ENCODE measurements at regions of chr10 and their contacts with region 1.

Region 1: GRCh38 chr10:6401562-6402348 is 178.3 kb downstream of the PRKCQ start:
- DNase-seq: peak; percentile 92
- H3K4me3 ChIP-seq: peak overlapping the region; percentile 35
- H3K27ac ChIP-seq: no peak overlapping the region
- H3K4me1 ChIP-seq: peaks cover 5% of the 10 kb centered on the region
- H3K27me3 ChIP-seq: peaks cover 20% of the 10 kb centered on the region
- CTCF ChIP-seq: peak; percentile 80

Region 2: DNA sequence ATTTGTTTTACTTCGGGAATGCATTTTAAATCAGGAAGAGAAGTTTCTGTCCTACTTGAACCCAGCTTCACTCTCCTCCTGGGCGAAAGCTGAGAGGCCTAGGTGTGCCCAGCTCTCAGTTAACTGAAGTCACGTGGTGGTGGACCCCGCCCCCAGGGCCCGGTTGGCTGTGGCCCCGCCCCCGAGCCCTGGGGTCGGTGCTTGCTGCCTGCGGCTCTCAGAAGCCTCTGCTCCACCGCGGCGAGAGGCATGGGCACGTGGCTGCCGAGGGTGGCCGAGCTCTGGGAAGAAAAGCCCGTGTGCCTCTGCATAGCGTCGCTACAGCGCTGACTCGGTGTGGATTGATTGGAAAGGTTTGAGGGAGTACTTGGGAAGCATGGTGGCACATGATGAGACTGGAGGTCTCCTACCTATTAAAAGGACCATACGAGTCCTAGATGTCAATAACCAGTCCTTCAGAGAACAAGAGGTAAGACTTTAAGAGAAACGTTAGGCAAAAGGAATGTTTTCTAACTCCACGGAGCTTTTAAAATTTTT is 955.3 kb before region 1 on chr10:
- CTCF ChIA-PET with region 1: no interaction called
- POLR2A ChIA-PET with region 1: no interaction called
- intact Hi-C with region 1: loop called (anchors 10 kb)
- DNase-seq: peak; percentile 92
- H3K4me3 ChIP-seq: peak overlapping the region; percentile 42
- H3K27ac ChIP-seq: peak overlapping the region; percentile 59
- H3K4me1 ChIP-seq: peaks cover 16% of the 10 kb centered on the region
- H3K27me3 ChIP-seq: no peaks in the 10 kb centered on the region
- CTCF ChIP-seq: no peak

Region 3: DNA sequence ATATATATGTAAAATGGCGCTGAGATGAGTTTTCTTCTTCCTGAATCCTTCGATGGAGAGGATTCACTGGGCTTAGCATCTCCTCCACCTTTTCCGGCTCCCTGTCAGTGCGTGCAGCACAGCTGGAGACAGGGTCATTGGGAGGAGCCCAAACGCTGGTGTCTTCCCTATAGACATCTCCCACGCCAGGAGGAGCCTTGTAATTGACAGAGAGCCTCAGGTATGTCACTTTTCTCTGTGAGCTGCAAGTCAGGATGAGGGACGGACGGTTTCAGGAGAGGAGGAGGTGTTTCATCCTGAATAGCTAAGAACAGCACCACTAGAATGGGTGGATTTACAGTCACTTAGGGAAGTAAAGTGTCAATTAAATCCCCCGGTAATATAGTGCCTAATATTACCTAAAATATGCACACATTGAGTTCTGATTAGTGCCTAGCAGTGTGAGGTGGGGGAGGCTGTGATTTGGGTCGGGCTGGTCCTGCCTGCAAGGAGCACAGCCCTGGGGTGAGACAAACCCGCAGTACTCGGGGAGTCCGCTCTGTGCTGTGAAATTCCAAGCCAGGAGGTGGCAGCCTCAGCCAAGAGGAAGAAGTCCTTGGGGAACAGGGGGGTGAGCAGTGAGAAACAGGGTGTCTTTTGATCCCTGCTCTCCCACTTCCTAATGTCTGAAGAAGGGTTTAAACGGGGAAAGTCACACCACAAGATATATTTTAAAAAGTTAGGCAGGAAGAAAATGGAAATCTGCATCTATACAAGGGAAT is 452.6 kb before region 1 on chr10:
- CTCF ChIA-PET with region 1: no interaction called
- POLR2A ChIA-PET with region 1: no interaction called
- intact Hi-C with region 1: loop called (anchors 5 kb)
- DNase-seq: peak; percentile 75
- H3K4me3 ChIP-seq: no peak overlapping the region
- H3K27ac ChIP-seq: no peak overlapping the region
- H3K4me1 ChIP-seq: peaks cover 13% of the 10 kb centered on the region
- H3K27me3 ChIP-seq: no peaks in the 10 kb centered on the region
- CTCF ChIP-seq: peak; percentile 67

Region 4: DNA sequence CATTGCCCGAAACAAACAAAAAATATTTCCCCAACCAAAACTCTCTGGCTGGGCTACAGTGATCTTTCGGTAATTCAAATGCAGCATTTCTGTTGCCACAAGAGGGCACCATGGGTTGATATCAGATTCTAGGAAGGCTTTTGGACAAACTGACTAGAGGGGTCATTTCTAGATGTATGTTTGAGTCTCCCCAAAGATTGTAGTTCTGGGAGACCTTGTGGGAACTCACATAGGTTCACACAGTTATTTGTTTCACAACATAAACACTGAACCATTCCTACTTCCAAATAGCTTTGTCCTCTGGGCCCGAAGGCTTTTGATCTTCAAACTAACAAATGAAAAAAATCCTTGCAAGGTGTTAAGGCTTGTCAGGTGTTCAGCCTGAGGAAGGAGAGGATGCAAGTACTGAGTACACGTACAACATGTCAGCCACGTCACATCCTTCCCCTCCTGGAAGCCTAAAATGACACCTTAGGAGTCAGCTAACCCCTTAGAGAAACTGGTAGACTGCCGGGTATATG is 387.5 kb before region 1 on chr10:
- CTCF ChIA-PET with region 1: interaction called, 11 read pairs
- POLR2A ChIA-PET with region 1: no interaction called
- intact Hi-C with region 1: loop called (anchors 2 kb)
- DNase-seq: peak; percentile 57
- H3K4me3 ChIP-seq: no peak overlapping the region
- H3K27ac ChIP-seq: no peak overlapping the region
- H3K4me1 ChIP-seq: no peaks in the 10 kb centered on the region
- H3K27me3 ChIP-seq: no peaks in the 10 kb centered on the region
- CTCF ChIP-seq: peak; percentile 84

Region 5: GRCh38 chr10:6088721-6089390 is 312.9 kb before region 1 on chr10 and contains the start of gene RBM17:
- CTCF ChIA-PET with region 1: interaction called, 28 read pairs
- POLR2A ChIA-PET with region 1: no interaction called
- intact Hi-C with region 1: loop called (anchors 2 kb)
- DNase-seq: peak; percentile 98
- H3K4me3 ChIP-seq: peak within 1 kb of the TSS; percentile 87
- H3K27ac ChIP-seq: peak within 1 kb of the TSS; percentile 95
- H3K4me1 ChIP-seq: peaks cover 25% of the 10 kb centered on the region
- H3K27me3 ChIP-seq: no peaks in the 10 kb centered on the region
- CTCF ChIP-seq: peak; percentile 100
- total RNA-seq, gene RBM17: 195 and 200 TPM in 2 replicates

Region 6: DNA sequence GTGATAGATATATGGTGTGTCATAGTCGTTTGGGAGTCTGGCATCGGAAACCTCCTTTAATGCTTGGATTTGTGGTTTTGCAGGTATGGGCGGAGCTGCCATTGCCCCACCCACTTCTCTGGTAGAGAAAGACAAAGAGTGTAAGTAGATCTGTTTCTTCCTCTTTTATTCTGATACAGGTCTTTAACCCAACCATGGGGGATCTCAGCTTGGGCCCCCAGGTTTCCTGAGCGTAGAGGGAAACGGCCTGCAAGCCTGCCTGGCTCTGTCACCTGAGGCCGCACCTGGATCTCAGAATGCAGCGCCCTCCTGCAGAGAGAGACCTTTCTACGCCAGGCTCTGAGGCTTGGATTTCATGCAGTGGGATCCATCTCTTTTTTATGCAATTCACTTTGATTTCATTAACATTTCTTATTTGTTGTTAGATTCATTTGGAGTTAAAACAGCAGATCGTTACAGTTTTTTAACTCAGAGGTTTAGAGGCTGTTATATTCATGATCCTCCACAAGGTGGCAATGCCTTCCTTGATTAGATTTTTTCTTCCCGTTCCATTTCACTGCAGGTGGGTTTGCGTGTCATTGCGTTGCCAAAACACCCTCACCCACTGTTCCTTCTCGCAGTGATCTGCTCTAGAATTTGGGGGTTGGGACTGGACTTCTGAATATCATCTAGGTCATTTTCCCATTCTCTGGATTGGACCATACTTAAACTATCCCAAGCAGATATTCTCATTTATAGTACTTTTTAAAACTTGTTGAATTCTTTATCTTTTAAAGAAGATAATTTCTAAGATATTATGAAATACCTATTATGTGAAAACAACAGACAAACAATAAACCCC is 292.9 kb before region 1 on chr10:
- CTCF ChIA-PET with region 1: interaction called, 10 read pairs
- POLR2A ChIA-PET with region 1: no interaction called
- intact Hi-C with region 1: loop called (anchors 1 kb)
- DNase-seq: peak; percentile 68
- H3K4me3 ChIP-seq: no peak overlapping the region
- H3K27ac ChIP-seq: no peak overlapping the region
- H3K4me1 ChIP-seq: no peaks in the 10 kb centered on the region
- H3K27me3 ChIP-seq: no peaks in the 10 kb centered on the region
- CTCF ChIP-seq: peak; percentile 71

Region 7: DNA sequence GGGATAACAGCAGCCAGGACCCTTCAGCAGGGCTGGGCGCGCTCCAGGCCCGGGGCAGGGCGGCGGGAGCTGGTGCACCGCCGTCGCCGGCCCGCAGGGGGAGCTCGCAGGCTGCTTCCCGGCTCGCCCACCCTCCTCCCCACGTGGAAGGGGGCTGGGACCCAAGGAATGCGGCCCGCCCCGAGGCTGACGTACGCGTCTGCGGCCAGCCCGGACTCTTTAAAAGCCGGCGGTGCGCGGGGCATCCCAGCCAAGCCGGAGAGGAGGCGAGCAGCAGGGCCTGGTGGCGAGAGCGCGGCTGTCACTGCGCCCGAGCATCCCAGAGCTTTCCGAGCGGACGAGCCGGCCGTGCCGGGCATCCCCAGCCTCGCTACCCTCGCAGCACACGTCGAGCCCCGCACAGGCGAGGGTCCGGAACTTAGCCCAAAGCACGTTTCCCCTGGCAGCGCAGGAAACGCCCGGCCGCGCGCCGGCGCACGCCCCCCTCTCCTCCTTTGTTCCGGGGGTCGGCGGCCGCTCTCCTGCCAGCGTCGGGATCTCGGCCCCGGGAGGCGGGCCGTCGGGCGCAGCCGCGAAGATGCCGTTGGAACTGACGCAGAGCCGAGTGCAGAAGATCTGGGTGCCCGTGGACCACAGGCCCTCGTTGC is 198.9 kb before region 1 on chr10 and contains the start of gene PFKFB3:
- CTCF ChIA-PET with region 1: interaction called, 74 read pairs
- POLR2A ChIA-PET with region 1: no interaction called
- intact Hi-C with region 1: loop called (anchors 1 kb)
- DNase-seq: peak; percentile 97
- H3K4me3 ChIP-seq: peak within 1 kb of the TSS; percentile 71
- H3K27ac ChIP-seq: peak within 1 kb of the TSS; percentile 75
- H3K4me1 ChIP-seq: peaks cover 25% of the 10 kb centered on the region
- H3K27me3 ChIP-seq: no peaks in the 10 kb centered on the region
- CTCF ChIP-seq: peak; percentile 83
- total RNA-seq, gene PFKFB3: 42.8 and 53.0 TPM in 2 replicates

Measured in A673 (cell line).